PC-3 (cell line): ENCODE measurements at regions of chr7 and their contacts with region 1.

Region 1: DNA sequence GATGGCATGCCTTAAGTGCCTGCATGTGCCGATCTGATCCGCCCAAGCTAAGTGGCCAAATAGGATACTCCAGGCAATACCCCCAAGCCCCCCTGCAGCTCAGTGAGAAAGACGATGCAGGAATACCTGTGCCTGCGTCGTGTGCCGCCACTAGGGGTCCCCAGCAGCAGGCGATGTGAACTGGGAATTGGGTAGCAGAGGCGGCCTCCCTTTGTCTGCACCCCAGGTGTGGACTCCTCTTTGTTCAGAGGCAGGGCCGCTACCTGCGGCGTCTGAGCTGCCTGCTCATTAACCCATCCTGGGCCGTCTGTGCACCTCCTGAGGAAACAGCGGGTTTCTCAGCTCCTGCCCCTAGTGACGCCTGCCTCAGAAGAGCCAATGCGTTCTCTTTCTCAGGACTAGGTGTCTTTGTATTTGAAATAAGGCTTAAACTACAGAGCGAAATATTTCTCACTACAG is 4.8 kb upstream of the CHN2 start:
- DNase-seq: peak; percentile 62
- ATAC-seq: peak; percentile 64
- H3K4me3 ChIP-seq: peak overlapping the region; percentile 42; the same call in 1 of the 2 replicates
- H3K27ac ChIP-seq: no peak overlapping the region; the same call in 1 of the 2 replicates
- H3K4me1 ChIP-seq: peaks cover 18% of the 10 kb centered on the region
- H3K27me3 ChIP-seq: no peaks in the 10 kb centered on the region
- CTCF ChIP-seq: peak; percentile 90

Region 2: GRCh38 chr7:28926871-28927597 is 262.7 kb before region 1 on chr7:
- CTCF ChIA-PET with region 1: interaction called, 10 read pairs
- POLR2A ChIA-PET with region 1: no interaction called
- intact Hi-C with region 1: loop called (anchors 2 kb)
- DNase-seq: peak; percentile 96
- ATAC-seq: peak; percentile 96
- H3K4me3 ChIP-seq: peak overlapping the region; percentile 75
- H3K27ac ChIP-seq: no peak overlapping the region
- H3K4me1 ChIP-seq: peaks cover 5% of the 10 kb centered on the region; the same call in 1 of the 2 replicates
- H3K27me3 ChIP-seq: no peaks in the 10 kb centered on the region
- CTCF ChIP-seq: peak; percentile 87

Region 3: DNA sequence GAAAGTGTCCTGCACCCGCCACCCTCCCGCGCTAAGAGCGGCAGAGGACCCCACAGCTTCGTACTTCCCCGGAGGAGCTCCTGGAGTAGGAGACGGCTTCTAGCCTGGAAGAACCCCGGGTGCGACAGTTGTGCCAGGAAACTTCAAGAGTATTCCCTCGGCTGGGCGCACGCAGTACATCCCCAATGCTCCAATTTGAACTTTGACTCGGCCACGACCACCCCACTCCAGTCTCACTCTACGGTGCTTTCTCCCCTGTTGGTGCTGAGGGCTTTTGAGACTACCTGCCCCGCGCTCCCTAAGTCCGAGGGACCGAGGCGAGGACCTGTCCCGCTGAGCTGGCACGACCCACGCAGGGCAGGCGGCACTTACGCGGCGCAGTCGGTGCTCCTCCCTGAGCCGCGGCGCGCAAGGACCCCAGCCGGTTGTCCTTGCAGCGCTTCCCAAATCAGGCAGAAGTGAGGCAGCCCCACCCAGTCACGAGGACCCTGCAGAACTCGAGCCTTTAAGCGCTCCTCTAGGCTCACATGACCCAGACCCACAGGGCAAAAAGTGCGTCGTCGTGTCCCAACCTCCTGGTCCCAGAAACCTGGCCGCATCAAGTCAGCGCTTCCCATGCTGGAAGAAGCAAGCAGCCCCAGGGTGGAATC is 43.6 kb before region 1 on chr7 and contains the start of gene CPVL:
- CTCF ChIA-PET with region 1: interaction called, 6 read pairs
- POLR2A ChIA-PET with region 1: no interaction called
- intact Hi-C with region 1: loop called (anchors 2 kb)
- DNase-seq: peak; percentile 73
- ATAC-seq: peak; percentile 75
- H3K4me3 ChIP-seq: peak within 1 kb of the TSS; percentile 73
- H3K27ac ChIP-seq: peak within 1 kb of the TSS; percentile 13; the same call in 1 of the 2 replicates
- H3K4me1 ChIP-seq: peaks cover 17% of the 10 kb centered on the region
- H3K27me3 ChIP-seq: no peaks in the 10 kb centered on the region
- CTCF ChIP-seq: no peak
- total RNA-seq, gene CPVL: 14.7 and 15.3 TPM in 2 replicates

Region 4: DNA sequence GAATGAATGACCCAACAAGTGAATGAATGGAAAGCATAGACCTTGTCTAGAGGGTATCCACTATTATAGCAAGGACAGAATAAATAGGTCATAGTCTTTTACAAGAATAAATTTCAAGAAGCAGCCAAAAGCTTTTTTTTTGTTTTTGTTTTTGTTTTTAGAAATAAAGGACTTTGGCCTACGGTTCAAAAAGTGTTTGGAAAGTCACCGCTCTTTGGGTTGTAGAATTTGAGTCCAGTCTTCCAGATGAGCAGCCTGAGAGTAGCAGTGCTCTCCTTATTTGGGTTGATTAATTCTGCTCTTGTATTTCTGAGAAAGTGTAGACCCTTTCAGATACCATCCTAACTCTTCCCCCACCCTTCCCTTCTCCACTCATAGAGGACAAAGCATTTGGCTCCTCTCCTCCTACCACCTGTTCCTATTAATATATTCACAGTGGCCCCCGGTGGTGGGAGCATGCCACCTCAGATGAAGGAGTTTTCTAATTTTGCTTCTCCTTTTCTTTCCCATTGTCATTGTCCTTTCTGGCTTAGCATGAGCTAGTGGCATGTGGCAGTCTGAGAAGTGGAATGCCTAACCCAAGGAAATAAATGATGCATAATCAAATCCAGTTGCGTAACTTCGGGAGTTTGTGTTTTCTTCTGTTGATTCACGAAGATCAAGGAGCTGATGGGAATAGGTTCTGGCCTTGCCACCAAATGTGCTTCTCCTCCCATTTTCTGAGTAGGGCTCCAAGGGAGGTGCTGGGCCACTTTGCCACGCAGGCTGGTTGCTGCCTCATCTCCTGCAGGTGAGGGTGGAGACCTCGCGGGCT is 119.5 kb after region 1 on chr7:
- CTCF ChIA-PET with region 1: interaction called, 13 read pairs
- POLR2A ChIA-PET with region 1: no interaction called
- intact Hi-C with region 1: loop called (anchors 1 kb)
- DNase-seq: peak; percentile 45
- ATAC-seq: peak; percentile 72
- H3K4me3 ChIP-seq: no peak overlapping the region
- H3K27ac ChIP-seq: no peak overlapping the region
- H3K4me1 ChIP-seq: peaks cover 16% of the 10 kb centered on the region
- H3K27me3 ChIP-seq: no peaks in the 10 kb centered on the region
- CTCF ChIP-seq: peak; percentile 59

Region 5: DNA sequence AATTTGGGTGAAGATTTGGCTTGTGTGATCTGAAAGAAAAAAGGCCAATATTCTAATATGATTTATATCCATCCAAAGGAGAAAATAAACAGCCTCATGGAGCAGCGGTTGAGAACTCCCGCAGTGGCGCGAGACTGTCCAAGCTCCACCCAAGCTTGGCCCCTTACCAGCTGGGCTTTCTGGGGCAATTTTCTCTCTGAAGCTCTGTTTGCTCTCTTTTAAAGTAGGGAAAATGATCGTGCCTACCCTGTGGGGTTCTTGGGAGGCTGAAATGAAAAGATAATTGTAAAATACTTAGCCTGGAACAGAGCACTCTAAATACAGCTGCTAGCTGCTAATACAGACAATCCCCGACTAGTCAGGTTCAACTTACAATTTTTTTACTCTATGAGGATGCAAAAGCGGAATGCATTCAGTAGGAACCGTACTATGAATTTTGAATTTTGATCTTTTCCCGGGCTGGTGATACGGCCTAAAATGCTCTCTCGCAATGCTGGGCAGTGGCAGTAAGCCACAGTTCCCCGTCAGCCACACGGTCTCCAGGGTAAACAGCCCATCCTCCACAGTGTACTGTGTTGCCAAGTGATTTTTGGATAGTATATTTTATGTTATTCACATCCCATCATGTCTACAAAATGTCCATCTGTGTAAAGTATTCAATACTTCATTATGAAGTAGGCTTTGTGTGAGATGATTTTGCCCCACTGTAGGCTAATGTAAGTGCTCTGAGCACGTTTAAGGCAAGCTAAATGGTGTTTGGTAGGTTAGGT is 142.5 kb after region 1 on chr7:
- CTCF ChIA-PET with region 1: no interaction called
- POLR2A ChIA-PET with region 1: no interaction called
- intact Hi-C with region 1: no loop called
- DNase-seq: no peak
- ATAC-seq: no peak
- H3K4me3 ChIP-seq: no peak overlapping the region
- H3K27ac ChIP-seq: no peak overlapping the region
- H3K4me1 ChIP-seq: 0 out of 2 replicates have a peak, but pooled peaks cover 3% of the 10 kb centered on the region
- H3K27me3 ChIP-seq: no peaks in the 10 kb centered on the region
- CTCF ChIP-seq: no peak

Region 6: DNA sequence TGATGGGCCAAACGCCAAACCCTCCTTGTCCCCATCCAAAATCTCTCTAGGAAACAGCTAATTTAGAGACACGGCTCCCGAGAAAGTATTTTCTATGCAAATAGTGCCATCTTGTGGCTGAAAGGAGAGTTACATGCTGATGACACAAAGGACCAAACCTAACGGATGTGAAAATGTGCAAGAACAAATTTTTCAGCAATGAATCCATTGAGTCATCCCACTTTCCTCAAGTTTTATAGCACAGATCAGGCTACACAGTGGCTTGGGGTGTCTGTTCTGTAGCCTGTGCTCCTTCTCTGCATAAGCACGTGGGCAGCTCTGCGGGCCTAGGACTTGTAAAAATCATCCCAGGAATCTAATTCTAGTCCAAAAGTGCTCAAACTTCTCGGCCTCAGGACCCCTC is 219.1 kb after region 1 on chr7:
- CTCF ChIA-PET with region 1: interaction called, 11 read pairs
- POLR2A ChIA-PET with region 1: no interaction called
- intact Hi-C with region 1: loop called (anchors 1 kb)
- DNase-seq: peak; percentile 94
- ATAC-seq: peak; percentile 95
- H3K4me3 ChIP-seq: no peak overlapping the region
- H3K27ac ChIP-seq: no peak overlapping the region
- H3K4me1 ChIP-seq: peaks cover 3% of the 10 kb centered on the region; the same call in 1 of the 2 replicates
- H3K27me3 ChIP-seq: no peaks in the 10 kb centered on the region
- CTCF ChIP-seq: peak; percentile 88

Region 7: GRCh38 chr7:29657856-29658255 is 468.1 kb after region 1 on chr7:
- CTCF ChIA-PET with region 1: no interaction called
- POLR2A ChIA-PET with region 1: no interaction called
- intact Hi-C with region 1: no loop called
- DNase-seq: no peak
- ATAC-seq: no peak
- H3K4me3 ChIP-seq: no peak overlapping the region
- H3K27ac ChIP-seq: no peak overlapping the region
- H3K4me1 ChIP-seq: peaks cover under 1% of the 10 kb centered on the region; the same call in 1 of the 2 replicates
- H3K27me3 ChIP-seq: no peaks in the 10 kb centered on the region
- CTCF ChIP-seq: no peak